Naive thymus-derived CD4-positive, alpha-beta T cell (primary cell): ENCODE measurements at regions of chr3 and their contacts with region 1.

Region 1: GRCh38 chr3:195748661-195749060 is 27.9 kb downstream of the MUC20 start:
- DNase-seq: no peak
- ATAC-seq: no peak
- H3K4me3 ChIP-seq: no peak overlapping the region
- H3K4me3 Mint-ChIP-seq: peak overlapping the region in 3 of 10 donors; percentile 29 to 40 (median 39)
- H3K27ac ChIP-seq: no peak overlapping the region
- H3K27ac Mint-ChIP-seq: peak overlapping the region in 4 of 9 donors; percentile 45 to 86 (median 70)
- H3K4me1 ChIP-seq: peaks cover 0 to 8% of the 10 kb centered on the region in 2 donors
- H3K4me1 Mint-ChIP-seq: peaks cover 6 to 18% (median 12%) of the 10 kb centered on the region in 7 donors
- H3K27me3 ChIP-seq: no peaks in the 10 kb centered on the region
- H3K27me3 Mint-ChIP-seq: peaks cover 0 to 7% (median 0%) of the 10 kb centered on the region in 5 donors

Region 2: DNA sequence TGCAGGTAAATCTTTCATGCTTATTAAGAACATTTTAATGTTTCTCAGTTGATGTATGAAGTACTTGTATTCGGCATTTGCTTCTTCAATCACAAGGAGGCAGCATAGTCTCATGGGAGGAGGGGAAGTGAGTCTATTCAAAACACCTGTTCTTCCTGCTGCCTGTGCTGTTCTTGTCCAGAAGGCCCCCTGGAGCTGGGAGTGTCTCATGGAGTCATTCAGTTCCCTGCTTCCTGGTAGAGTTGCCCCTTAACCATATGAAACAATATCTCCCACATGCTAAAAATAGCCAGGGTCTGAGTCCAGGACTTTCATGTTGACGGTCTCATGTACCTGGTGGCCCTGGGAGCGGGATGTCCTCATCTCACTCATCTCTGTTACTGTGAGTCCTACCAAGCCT is 190.1 kb before region 1 on chr3:
- CTCF ChIA-PET with region 1: no interaction called
- POLR2A ChIA-PET with region 1: no interaction called
- intact Hi-C with region 1: loop called in 1 of 2 experiments (anchors 1 kb)
- DNase-seq: peak in 7 of 9 donors; percentile 56 to 75 (median 67)
- ATAC-seq: peak; percentile 72
- H3K4me3 ChIP-seq: no peak overlapping the region
- H3K4me3 Mint-ChIP-seq: peak overlapping the region in 1 of 10 donors; percentile 33
- H3K27ac ChIP-seq: no peak overlapping the region
- H3K27ac Mint-ChIP-seq: peak overlapping the region in 8 of 9 donors; percentile 46 to 83 (median 68)
- H3K4me1 ChIP-seq: peaks cover 0 to 37% of the 10 kb centered on the region in 2 donors
- H3K4me1 Mint-ChIP-seq: peaks cover 20 to 45% (median 38%) of the 10 kb centered on the region in 7 donors
- H3K27me3 ChIP-seq: no peaks in the 10 kb centered on the region
- H3K27me3 Mint-ChIP-seq: no peaks in the 10 kb centered on the region

Region 3: GRCh38 chr3:195729476-195730251 is 19.0 kb before region 1 on chr3:
- CTCF ChIA-PET with region 1: no interaction called
- POLR2A ChIA-PET with region 1: no interaction called
- intact Hi-C with region 1: loop called in 1 of 2 experiments (anchors 1 kb)
- DNase-seq: no peak
- ATAC-seq: no peak
- H3K4me3 ChIP-seq: no peak overlapping the region
- H3K4me3 Mint-ChIP-seq: no peak overlapping the region
- H3K27ac ChIP-seq: no peak overlapping the region
- H3K27ac Mint-ChIP-seq: no peak overlapping the region
- H3K4me1 ChIP-seq: no peaks in the 10 kb centered on the region
- H3K4me1 Mint-ChIP-seq: peaks cover 0 to 3% (median 0%) of the 10 kb centered on the region in 7 donors
- H3K27me3 ChIP-seq: no peaks in the 10 kb centered on the region
- H3K27me3 Mint-ChIP-seq: no peaks in the 10 kb centered on the region

Region 4: GRCh38 chr3:195894780-195895607 is 146.3 kb after region 1 on chr3:
- CTCF ChIA-PET with region 1: no interaction called
- POLR2A ChIA-PET with region 1: no interaction called
- intact Hi-C with region 1: loop called in 1 of 2 experiments (anchors 5 kb)
- DNase-seq: peak; percentile 58 to 77 (median 69)
- ATAC-seq: peak; percentile 78
- H3K4me3 ChIP-seq: peak overlapping the region; percentile 98
- H3K4me3 Mint-ChIP-seq: peak overlapping the region; percentile 88 to 96 (median 92)
- H3K27ac ChIP-seq: peak overlapping the region; percentile 75
- H3K27ac Mint-ChIP-seq: peak overlapping the region; percentile 88 to 96 (median 91)
- H3K4me1 ChIP-seq: peaks cover 7 to 32% of the 10 kb centered on the region in 2 donors
- H3K4me1 Mint-ChIP-seq: peaks cover 43 to 60% (median 49%) of the 10 kb centered on the region in 7 donors
- H3K27me3 ChIP-seq: no peaks in the 10 kb centered on the region
- H3K27me3 Mint-ChIP-seq: no peaks in the 10 kb centered on the region

Region 5: DNA sequence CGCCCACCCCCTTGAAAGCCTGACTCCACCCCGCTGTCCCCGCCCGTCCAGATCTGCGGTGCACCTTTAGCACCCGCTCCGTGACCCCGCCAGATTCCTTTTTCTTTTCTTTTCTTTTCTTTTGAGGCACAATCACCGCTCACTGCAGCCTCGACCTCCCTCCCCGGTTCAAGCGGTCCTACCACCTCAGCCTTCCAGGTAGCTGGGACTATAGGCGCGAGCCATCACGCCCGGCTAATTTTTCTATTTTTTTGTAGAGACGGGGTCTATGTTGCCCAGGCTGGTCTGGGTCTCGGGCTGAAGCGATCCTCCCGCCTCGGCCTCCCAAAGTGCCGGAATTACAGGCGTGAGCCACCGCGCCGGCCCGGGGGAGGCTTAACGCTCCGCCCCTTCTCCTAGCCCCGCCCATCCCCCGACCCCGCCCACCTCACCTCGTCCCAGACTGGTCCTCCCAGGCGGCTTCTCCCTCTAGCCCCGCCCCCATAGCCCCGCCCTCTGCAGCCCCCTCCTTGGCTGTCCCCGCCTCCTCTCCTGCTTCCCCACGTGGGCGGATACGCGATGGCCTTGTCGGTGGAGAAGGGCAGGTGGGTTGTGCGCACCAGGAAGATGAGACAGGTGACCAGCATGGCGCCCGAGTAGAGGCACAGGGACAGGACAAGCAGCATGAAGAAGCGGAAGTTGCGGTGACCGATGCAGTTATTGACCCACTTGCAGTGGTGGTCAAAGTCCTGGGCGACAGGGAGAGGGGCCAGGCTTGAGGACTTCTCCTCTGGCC is 459.4 kb after region 1 on chr3:
- CTCF ChIA-PET with region 1: no interaction called
- POLR2A ChIA-PET with region 1: no interaction called
- intact Hi-C with region 1: loop called in 1 of 2 experiments (anchors 5 kb)
- DNase-seq: peak in 8 of 9 donors; percentile 31 to 76 (median 48)
- ATAC-seq: peak; percentile 81
- H3K4me3 ChIP-seq: peak overlapping the region; percentile 56
- H3K4me3 Mint-ChIP-seq: peak overlapping the region; percentile 68 to 89 (median 86)
- H3K27ac ChIP-seq: no peak overlapping the region
- H3K27ac Mint-ChIP-seq: peak overlapping the region in 8 of 9 donors; percentile 32 to 86 (median 56)
- H3K4me1 ChIP-seq: peaks cover 0 to 3% of the 10 kb centered on the region in 2 donors
- H3K4me1 Mint-ChIP-seq: peaks cover 5 to 24% (median 12%) of the 10 kb centered on the region in 7 donors
- H3K27me3 ChIP-seq: no peaks in the 10 kb centered on the region
- H3K27me3 Mint-ChIP-seq: peaks cover 0 to 31% (median 0%) of the 10 kb centered on the region in 5 donors